Calu3 (cell line): ENCODE measurements at regions of chr18 and their contacts with region 1.

Region 1: DNA sequence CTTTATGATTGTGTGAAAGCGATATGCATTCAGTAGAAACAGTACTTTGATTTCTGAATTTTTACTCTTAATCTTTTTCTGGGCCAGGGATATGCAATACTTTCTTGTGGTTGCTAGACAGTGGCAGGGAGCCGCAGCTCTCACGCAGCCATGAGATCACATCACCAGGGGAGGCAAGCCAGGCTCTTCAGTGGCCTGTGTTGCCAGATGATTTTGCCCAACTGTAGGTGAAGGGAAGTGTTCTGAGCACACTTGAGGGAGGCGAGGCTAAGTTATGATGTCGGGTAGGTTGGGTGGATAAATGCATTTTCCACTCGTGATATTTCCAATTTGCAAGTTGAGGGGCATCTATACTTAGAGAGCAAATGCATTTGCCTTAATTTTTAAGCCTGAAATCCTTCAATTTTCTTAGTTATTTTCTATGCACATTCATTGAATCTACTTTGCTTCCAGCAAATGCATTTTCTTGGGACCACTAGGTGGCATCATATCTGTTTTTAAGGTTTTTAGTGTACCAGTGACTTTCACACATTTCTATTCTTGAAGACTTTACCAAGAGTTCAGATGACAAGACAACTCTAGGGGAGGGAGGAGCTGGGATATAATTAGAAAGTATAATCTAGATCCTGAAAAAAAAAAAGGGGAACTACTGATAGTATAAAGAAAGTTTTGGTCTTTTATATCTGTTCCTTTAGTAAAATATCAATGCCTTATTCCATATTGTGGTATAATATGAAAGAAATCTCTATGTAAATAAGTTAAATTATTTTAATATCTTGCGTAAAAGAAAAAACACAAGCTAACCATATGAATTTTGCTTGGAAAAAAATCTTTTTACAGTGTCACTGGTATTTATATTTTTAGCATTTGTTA is 643.3 kb downstream of the SOCS6 start:
- DNase-seq: peak; percentile 7
- H3K4me3 Mint-ChIP-seq: no peak overlapping the region
- H3K27ac Mint-ChIP-seq: no peak overlapping the region
- H3K4me1 Mint-ChIP-seq: peaks cover 8% of the 10 kb centered on the region
- H3K27me3 Mint-ChIP-seq: no peaks in the 10 kb centered on the region
- CTCF ChIP-seq: peak; percentile 49

Region 2: GRCh38 chr18:72086421-72086820 is 1154.2 kb after region 1 on chr18:
- CTCF ChIA-PET with region 1: no interaction called
- intact Hi-C with region 1: loop called (anchors 5 kb)
- DNase-seq: no peak
- H3K4me3 Mint-ChIP-seq: no peak overlapping the region
- H3K27ac Mint-ChIP-seq: no peak overlapping the region
- H3K4me1 Mint-ChIP-seq: peaks cover 9% of the 10 kb centered on the region
- H3K27me3 Mint-ChIP-seq: no peaks in the 10 kb centered on the region
- CTCF ChIP-seq: peak; percentile 62

Region 3: GRCh38 chr18:72544092-72544886 is 1612.1 kb after region 1 on chr18 and contains the start of gene CBLN2:
- CTCF ChIA-PET with region 1: no interaction called
- intact Hi-C with region 1: loop called (anchors 5 kb)
- DNase-seq: peak; percentile 89
- H3K4me3 Mint-ChIP-seq: peak within 1 kb of the TSS; percentile 60
- H3K27ac Mint-ChIP-seq: no peak within 1 kb of the TSS
- H3K4me1 Mint-ChIP-seq: no peaks in the 10 kb centered on the region
- H3K27me3 Mint-ChIP-seq: no peaks in the 10 kb centered on the region
- CTCF ChIP-seq: peak; percentile 93
- total RNA-seq, gene CBLN2: 0.24 TPM in 1 of 2 replicates, not detected in the other